Sciatic nerve (tissue), 2 donors: ENCODE measurements at regions of chr1 and their contacts with region 1.

Region 1: GRCh38 chr1:17168091-17168876 is 36.6 kb upstream of the PADI1 start:
- DNase-seq: no peak
- ATAC-seq: no peak

Region 2: DNA sequence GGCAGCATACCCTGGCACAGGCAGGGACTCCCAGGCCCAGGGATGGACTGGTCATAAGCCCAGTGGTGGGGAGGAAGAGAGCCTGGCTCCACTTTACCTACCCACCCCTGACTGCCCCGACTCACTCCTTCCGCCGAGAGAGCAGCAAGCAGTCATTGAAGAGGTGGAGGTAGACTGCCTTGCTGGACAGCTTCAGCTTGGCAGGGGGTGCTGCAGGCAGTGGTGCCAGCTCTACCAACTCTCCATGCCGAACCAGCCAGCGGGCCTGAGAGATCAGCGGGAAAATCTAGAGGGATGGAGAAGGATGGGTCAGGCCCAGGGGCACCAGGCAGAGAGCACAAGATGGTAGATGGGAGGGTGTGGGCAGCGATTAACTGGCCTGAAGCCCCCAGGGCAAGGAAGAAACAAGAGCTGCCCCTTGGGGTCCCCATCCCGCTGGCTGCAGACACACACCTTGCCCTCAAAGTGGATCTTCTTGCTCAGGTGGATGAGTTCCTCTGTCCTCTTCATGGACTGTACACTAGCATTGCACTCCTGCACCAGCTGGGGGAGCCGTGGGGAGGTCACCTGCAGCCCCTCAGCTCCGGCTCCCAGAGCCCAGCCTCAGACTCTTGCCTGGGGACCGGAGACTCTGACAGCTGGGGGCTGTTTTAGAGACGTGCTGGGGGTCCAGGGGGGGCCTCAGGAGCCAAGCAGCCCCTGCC is 963.5 kb before region 1 on chr1:
- intact Hi-C with region 1: loop called (anchors 5 kb)
- DNase-seq: no peak
- ATAC-seq: no peak

Region 3: DNA sequence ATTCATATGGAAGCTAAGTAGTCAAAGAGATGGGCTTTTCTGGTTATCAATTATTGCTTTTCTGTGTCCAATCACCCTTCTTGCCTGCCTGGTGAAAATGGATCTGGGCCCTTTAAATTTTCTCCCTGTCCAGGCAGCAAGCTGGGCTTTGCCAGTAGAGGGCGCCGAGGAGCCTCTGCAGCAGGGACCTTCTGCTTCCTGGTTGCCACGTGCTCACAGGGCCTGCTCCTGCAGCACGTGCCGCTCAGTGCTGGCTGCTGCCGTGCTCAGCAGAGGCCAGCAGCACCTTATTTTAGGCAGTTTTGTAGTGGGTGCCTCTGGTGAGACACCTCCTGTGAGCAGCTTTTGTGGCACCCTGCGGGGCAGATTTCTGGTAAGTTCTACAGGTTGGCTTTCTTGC is 590.8 kb after region 1 on chr1:
- intact Hi-C with region 1: loop called (anchors 10 kb)
- DNase-seq: no peak
- ATAC-seq: no peak